ENCODE measurements at regions of chr17 and their contacts with region 1.

Region 1: GRCh38 chr17:19513897-19514488 is 19.7 kb upstream of the SLC47A1 start:
- DNase-seq: peak; percentile 47 to 94 (median 76)

Region 2: GRCh38 chr17:19377602-19378392 is 136.2 kb before region 1 on chr17:
- intact Hi-C with region 1: no loop called
- DNase-seq: peak; percentile 97 to 100 (median 99)

Region 3: DNA sequence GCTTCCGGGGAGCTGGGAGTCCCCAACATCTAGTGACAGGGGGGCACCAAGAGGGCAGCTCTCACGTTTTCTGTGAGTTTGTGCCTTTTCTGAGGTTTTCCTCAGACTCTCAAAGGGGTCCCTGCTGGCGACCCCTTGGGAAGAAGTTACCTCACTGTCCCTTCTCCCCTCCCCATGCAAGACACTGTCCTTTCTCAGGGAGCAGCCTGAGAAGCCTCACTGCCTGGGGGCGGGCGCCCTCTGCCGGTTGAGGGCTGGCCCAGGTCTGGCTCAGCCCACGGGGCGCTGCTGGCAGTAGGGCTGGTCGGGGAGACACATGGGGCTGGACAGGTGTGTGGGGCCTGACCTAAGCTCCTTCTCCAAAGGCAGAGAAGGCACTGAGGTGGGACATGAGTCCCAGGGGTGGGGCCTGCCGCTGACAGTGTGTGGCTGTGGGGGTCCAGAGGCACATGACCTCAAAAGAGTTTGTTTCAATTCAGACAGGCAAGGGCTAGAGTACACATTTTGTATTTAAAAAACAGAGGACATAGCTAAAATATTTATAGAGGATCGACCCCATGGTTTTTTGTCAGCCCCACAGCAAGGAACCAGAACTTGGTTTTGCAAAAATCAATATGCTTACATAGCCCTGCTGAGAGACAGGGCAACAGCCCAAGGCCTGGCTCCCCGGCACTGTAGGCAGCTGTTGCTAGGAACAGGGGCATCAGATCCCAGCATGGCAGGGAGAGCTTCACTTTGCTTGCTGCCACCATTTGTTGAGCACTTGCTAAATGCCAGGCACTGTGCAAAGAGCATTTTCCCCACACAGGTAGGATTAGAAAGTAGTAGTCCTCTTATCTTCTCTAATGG is 252.7 kb after region 1 on chr17:
- intact Hi-C with region 1: loop called (anchors 1 kb)
- DNase-seq: peak; percentile 58 to 98 (median 88)